HEK293 (cell line): ENCODE measurements at regions of chr17 and their contacts with region 1.

Region 1: GRCh38 chr17:61593426-61593825 is 2.4 kb upstream of the NACA2 start:
- H3K4me3 ChIP-seq: no peak overlapping the region
- H3K27ac ChIP-seq: no peak overlapping the region
- H3K4me1 ChIP-seq: no peaks in the 10 kb centered on the region
- CTCF ChIP-seq: no peak

Region 2: DNA sequence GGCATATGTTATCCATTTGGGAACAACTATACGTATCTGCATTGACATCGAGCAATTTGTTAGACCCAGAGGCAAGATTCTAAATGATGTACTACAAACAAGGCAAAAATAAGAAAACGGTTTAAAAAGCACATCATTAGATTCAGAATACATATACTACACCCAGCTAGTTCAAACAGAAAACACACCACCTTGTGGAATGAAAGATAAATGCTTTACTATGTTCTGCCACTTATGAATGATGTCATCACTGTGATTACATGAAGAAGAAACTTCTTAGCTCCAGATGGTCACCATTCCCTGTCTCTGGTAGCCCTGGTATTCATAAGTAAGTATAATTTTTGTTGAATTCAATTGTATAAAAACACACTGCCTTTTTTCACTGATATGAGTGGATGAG is 10.2 kb before region 1 on chr17:
- CTCF ChIA-PET with region 1: interaction called, 10 read pairs
- POLR2A ChIA-PET with region 1: no interaction called
- H3K4me3 ChIP-seq: no peak overlapping the region
- H3K27ac ChIP-seq: no peak overlapping the region
- H3K4me1 ChIP-seq: peaks cover 8% of the 10 kb centered on the region; the same call in 1 of the 2 replicates
- CTCF ChIP-seq: peak; percentile 36; the same call in 1 of the 2 replicates

Region 3: GRCh38 chr17:61669522-61669921 is 76.1 kb after region 1 on chr17:
- CTCF ChIA-PET with region 1: no interaction called
- POLR2A ChIA-PET with region 1: no interaction called
- H3K4me3 ChIP-seq: no peak overlapping the region
- H3K27ac ChIP-seq: no peak overlapping the region
- H3K4me1 ChIP-seq: no peaks in the 10 kb centered on the region
- CTCF ChIP-seq: no peak

Region 4: DNA sequence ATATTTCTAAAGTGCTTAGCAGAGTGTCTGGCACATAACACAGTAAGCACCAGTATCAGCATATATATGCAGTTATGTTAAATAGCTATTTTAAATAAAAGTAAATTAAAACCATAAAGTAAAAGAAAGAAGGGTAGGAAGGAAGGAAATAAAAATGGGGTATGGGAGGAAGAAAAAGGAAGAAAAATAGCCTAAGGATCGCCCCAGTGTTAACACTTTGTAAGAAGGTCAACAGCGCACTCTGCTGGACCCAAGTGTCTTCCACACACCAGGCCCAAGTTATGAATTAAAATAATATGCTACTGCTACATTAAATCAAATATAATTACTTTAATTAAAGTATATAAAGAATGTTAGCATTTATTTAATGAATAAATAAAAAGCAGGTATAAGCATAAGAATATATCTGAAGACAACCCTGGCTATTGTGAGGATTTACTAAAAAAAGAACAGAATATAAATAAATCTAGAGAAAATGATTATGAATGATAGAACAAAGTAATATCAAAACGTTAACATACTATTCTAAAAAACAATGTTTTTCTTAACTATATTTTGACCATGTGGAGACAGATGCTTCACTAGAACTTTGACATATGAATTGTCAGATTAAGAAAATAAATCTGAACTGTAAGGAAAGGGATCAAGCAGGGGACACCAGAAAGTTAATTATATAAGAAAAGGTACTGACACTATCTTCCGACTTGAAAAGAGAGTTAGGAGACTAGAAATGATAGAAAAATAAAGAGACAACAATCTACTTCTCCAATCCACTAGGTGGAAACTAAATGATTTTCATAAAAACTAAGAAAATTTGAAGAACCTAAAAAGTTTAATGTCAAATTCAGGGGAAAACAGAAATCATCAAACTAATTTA is 244.0 kb after region 1 on chr17:
- CTCF ChIA-PET with region 1: interaction called, 4 read pairs
- POLR2A ChIA-PET with region 1: interaction called, 11 read pairs
- H3K4me3 ChIP-seq: no peak overlapping the region
- H3K27ac ChIP-seq: no peak overlapping the region
- H3K4me1 ChIP-seq: no peaks in the 10 kb centered on the region
- CTCF ChIP-seq: peak; percentile 27; the same call in 1 of the 2 replicates